ENCODE measurements at regions of chr17 and their contacts with region 1.

Region 1: DNA sequence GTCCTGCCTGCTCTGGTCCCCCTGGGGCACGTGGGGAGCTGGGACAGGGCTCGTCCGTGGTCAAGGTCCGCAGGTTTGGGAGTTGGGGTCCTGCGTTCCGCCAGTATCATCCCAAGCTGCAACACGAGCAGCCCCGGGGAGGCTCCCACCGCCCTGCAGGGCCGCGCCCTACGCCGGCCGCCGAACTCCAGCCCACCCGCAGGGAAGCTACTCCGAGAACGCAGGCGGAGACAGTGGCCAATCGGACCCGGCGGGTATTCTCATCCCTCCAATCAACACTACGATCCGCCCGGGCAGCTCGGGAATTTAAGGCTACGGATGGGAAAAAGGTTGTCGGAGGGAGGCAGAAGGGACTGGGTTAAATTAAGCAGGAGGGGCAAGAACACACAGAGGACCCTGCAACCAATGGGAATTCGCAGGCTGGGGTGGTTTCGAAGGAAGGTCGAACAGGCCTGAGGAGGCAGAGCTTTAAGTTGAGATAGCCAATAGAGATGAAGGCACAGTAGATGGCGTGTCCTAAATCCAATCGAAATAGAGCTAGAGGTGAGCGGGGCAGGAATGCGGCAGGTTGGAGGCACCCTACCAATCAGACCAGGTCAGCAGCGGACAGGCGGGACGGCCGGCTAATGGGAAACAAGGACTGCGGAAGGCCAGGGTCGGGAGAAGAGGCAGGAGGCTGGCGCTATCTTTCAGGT is 626 bp downstream of the SPAG7 start:
- DNase-seq: peak; percentile 100
- ATAC-seq: peak; percentile 91
- H3K4me3 ChIP-seq: peak overlapping the region; percentile 89
- H3K27ac ChIP-seq: peak overlapping the region; percentile 100
- H3K4me1 ChIP-seq: peaks cover 14% of the 10 kb centered on the region
- H3K27me3 ChIP-seq: no peaks in the 10 kb centered on the region
- CTCF ChIP-seq: no peak
- EP300 ChIP-seq: no peak
- POLR2A ChIP-seq: peak; percentile 67
- RAD21 ChIP-seq: no peak

Region 2: DNA sequence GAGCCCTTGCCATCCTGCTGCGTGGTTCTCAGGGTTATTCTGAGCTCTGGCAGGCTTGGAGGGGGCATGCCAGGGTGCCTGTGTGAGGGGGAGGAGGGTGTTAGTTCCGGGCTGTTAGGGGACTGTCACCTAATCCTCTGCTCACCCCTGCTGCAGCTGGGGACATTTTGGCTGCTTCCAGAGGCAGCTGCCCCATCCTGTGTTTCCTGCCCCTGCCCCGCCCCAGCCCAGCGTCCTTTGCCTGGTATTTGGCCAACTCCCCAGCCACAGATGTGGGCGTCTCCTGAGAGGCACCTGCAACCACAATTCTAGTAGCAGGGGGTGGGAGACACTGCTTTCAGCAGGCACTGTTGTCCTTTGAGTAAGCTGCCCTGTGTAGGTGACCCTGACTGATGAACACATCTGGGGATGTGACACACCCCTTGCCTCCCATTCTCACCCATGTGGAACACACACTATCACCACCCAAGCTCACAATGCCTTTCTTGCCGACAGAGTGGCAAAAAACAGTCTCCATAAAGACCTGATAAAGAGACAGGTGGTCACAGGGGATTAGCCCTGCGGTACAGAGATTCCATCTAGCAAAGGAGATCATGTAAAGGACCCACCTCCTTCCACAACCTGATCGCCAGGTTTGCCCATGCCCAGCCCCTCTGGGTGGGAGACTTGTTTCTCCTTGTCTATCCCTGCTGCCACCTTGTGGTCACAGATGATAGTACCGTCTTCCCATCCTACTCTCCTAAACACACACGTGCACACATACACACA is 63.8 kb before region 1 on chr17 and contains the start of gene CHRNE:
- CTCF ChIA-PET with region 1: interaction called, 11 read pairs
- POLR2A ChIA-PET with region 1: interaction called, 6 read pairs
- RAD21 ChIA-PET with region 1: no interaction called
- SMC1A ChIA-PET with region 1: interaction called, 4 read pairs
- in situ Hi-C with region 1: no loop called
- intact Hi-C with region 1: no loop called
- DNase-seq: peak; percentile 37
- ATAC-seq: peak; percentile 80
- H3K4me3 ChIP-seq: no peak within 1 kb of the TSS
- H3K27ac ChIP-seq: no peak within 1 kb of the TSS
- H3K4me1 ChIP-seq: peaks cover 20% of the 10 kb centered on the region
- H3K27me3 ChIP-seq: no peaks in the 10 kb centered on the region; a peak in 2 of 4 replicates
- CTCF ChIP-seq: peak; percentile 73 to 81 (median 77)
- EP300 ChIP-seq: no peak
- POLR2A ChIP-seq: no peak
- RAD21 ChIP-seq: peak; percentile 51
- polyA plus RNA-seq, gene CHRNE: 0.05 TPM in 1 of 2 experiments, not detected in the other

Region 3: GRCh38 chr17:4939796-4940624 is 27.0 kb before region 1 on chr17 and contains the starts of genes RNF167 and SLC25A11:
- CTCF ChIA-PET with region 1: interaction called, 28 read pairs
- POLR2A ChIA-PET with region 1: interaction called, 272 read pairs
- RAD21 ChIA-PET with region 1: interaction called, 73 read pairs
- SMC1A ChIA-PET with region 1: interaction called, 50 read pairs
- in situ Hi-C with region 1: no loop called
- intact Hi-C with region 1: no loop called
- DNase-seq: peak; percentile 100
- ATAC-seq: peak; percentile 83
- H3K4me3 ChIP-seq: peak within 1 kb of the TSS; percentile 92
- H3K27ac ChIP-seq: peak within 1 kb of the TSS; percentile 97
- H3K4me1 ChIP-seq: peaks cover 41% of the 10 kb centered on the region
- H3K27me3 ChIP-seq: no peaks in the 10 kb centered on the region
- CTCF ChIP-seq: no peak
- EP300 ChIP-seq: no peak
- POLR2A ChIP-seq: peak; percentile 88
- RAD21 ChIP-seq: no peak
- polyA plus RNA-seq, gene RNF167: 33.6 to 35.3 TPM
- polyA plus RNA-seq, gene SLC25A11: 5.8 to 10.9 TPM

Region 4: DNA sequence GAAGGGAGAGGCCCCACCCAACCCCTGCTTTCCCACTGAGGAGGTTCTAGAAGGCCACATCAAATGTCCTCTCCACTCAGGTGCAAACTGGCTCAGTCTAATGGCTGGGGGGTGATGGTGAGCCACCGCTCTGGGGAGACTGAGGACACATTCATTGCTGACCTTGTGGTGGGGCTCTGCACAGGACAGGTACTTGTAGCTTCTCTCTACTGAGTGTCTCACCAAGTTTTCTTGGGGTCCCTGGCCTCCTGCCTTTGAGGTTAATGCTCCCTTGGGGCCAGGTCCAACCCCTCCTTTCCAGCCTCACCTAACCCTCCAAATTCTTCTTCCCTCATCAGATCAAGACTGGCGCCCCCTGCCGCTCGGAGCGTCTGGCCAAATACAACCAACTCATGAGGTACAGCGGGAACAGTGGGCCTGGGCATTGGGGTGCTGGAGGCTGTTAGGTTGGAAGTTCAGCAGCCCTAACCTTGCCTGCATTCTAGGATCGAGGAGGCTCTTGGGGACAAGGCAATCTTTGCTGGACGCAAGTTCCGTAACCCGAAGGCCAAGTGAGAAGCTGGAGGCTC is 10.4 kb before region 1 on chr17:
- CTCF ChIA-PET with region 1: interaction called, 23 read pairs
- POLR2A ChIA-PET with region 1: interaction called, 272 read pairs
- RAD21 ChIA-PET with region 1: interaction called, 73 read pairs
- SMC1A ChIA-PET with region 1: interaction called, 24 read pairs
- in situ Hi-C with region 1: no loop called
- intact Hi-C with region 1: no loop called
- DNase-seq: no peak
- ATAC-seq: peak; percentile 54; the same call in 2 of the 3 replicates
- H3K4me3 ChIP-seq: no peak overlapping the region
- H3K27ac ChIP-seq: no peak overlapping the region
- H3K4me1 ChIP-seq: peaks cover 3% of the 10 kb centered on the region
- H3K27me3 ChIP-seq: no peaks in the 10 kb centered on the region
- CTCF ChIP-seq: peak; percentile 33 to 54 (median 41)
- EP300 ChIP-seq: no peak
- POLR2A ChIP-seq: no peak
- RAD21 ChIP-seq: no peak

Region 5: GRCh38 chr17:4986951-4987766 is 20.2 kb after region 1 on chr17 and contains the start of gene CAMTA2:
- CTCF ChIA-PET with region 1: interaction called, 10 read pairs
- POLR2A ChIA-PET with region 1: interaction called, 13 read pairs
- RAD21 ChIA-PET with region 1: interaction called, 13 read pairs
- SMC1A ChIA-PET with region 1: interaction called, 13 read pairs
- in situ Hi-C with region 1: no loop called
- intact Hi-C with region 1: no loop called
- DNase-seq: no peak
- ATAC-seq: peak; percentile 92
- H3K4me3 ChIP-seq: peak within 1 kb of the TSS; percentile 74
- H3K27ac ChIP-seq: peak within 1 kb of the TSS; percentile 90
- H3K4me1 ChIP-seq: peaks cover 19% of the 10 kb centered on the region
- H3K27me3 ChIP-seq: no peaks in the 10 kb centered on the region
- CTCF ChIP-seq: peak; percentile 61 to 66 (median 66); a peak in 5 of 6 replicates
- EP300 ChIP-seq: no peak
- POLR2A ChIP-seq: peak; percentile 89
- RAD21 ChIP-seq: peak; percentile 33
- polyA plus RNA-seq, gene CAMTA2: 0.42 to 1.7 TPM

Region 6: GRCh38 chr17:5019475-5019956 is 52.5 kb after region 1 on chr17:
- CTCF ChIA-PET with region 1: no interaction called
- POLR2A ChIA-PET with region 1: no interaction called
- RAD21 ChIA-PET with region 1: interaction called, 3 read pairs
- SMC1A ChIA-PET with region 1: interaction called, 4 read pairs
- in situ Hi-C with region 1: no loop called
- intact Hi-C with region 1: loop called (anchors 1 kb)
- DNase-seq: no peak
- ATAC-seq: peak; percentile 24; the same call in 1 of the 3 replicates
- H3K4me3 ChIP-seq: no peak overlapping the region
- H3K27ac ChIP-seq: no peak overlapping the region
- H3K4me1 ChIP-seq: peaks cover 12% of the 10 kb centered on the region
- H3K27me3 ChIP-seq: no peaks in the 10 kb centered on the region
- CTCF ChIP-seq: peak; percentile 25 to 40 (median 31); a peak in 4 of 6 replicates
- EP300 ChIP-seq: no peak
- POLR2A ChIP-seq: no peak
- RAD21 ChIP-seq: peak; percentile 51

Region 7: DNA sequence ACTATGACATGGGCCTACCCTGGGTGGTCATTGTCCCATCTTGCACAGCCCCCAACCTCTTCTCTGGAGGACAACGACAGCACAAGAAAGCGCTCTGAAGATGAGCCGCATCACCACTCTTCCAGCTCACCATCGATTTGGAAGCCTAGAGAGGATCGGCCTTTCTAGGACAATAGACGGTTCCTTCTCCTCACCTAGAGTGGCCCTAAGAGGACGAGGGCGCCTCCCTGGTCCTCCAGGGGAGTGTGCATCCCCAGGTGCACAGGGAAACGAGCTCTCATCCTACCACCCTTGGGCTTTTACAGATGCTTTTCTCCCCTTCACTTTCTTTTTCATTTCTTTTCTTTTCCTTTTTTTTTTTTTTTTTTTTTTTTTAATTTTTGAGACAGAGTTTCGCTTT is 88.6 kb after region 1 on chr17:
- CTCF ChIA-PET with region 1: no interaction called
- POLR2A ChIA-PET with region 1: interaction called, 7 read pairs
- RAD21 ChIA-PET with region 1: interaction called, 4 read pairs
- SMC1A ChIA-PET with region 1: no interaction called
- in situ Hi-C with region 1: no loop called
- intact Hi-C with region 1: loop called (anchors 5 kb)
- DNase-seq: no peak
- ATAC-seq: no peak
- H3K4me3 ChIP-seq: no peak overlapping the region
- H3K27ac ChIP-seq: no peak overlapping the region
- H3K4me1 ChIP-seq: no peaks in the 10 kb centered on the region
- H3K27me3 ChIP-seq: no peaks in the 10 kb centered on the region
- CTCF ChIP-seq: no peak
- EP300 ChIP-seq: no peak
- POLR2A ChIP-seq: no peak
- RAD21 ChIP-seq: no peak

Measured in GM12878 (cell line).